Common myeloid progenitor, CD34-positive (primary cell): ENCODE measurements at regions of chr5 and their contacts with region 1.

Region 1: DNA sequence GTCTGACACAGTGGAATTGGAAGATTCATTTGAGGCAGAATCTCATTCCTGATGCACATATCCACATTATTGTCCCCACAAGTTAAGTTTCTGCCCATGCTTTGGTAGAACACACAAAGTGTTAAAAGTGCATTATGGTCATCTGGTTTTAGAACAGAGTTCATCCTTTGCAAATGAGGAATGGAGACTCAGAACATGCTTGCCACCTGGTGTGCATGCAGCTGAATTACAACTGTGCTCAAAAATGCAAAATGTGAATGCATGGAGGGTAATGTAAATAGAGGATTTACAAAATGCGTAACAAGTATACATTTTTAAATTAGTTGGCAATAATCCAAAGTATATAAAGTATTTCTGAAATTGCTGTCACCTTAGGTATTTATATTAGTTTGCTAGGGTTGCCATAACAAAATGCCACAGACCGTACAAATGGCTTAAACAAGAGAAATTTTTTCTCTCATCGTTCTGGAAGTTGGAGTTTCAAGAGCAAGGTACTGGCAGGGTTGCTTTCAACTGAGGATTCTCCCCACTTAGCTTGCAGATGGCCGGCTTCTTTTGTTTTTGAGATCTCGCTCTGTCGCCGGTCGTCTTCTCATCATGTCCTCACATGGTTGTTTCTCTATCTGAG is 671.2 kb downstream of the TAF11L14 start:
- DNase-seq: peak; percentile 29 to 54 (median 50)
- H3K4me3 ChIP-seq: no peak overlapping the region
- H3K27ac ChIP-seq: no peak overlapping the region
- H3K4me1 ChIP-seq: no peaks in the 10 kb centered on the region
- H3K27me3 ChIP-seq: no peaks in the 10 kb centered on the region

Region 2: DNA sequence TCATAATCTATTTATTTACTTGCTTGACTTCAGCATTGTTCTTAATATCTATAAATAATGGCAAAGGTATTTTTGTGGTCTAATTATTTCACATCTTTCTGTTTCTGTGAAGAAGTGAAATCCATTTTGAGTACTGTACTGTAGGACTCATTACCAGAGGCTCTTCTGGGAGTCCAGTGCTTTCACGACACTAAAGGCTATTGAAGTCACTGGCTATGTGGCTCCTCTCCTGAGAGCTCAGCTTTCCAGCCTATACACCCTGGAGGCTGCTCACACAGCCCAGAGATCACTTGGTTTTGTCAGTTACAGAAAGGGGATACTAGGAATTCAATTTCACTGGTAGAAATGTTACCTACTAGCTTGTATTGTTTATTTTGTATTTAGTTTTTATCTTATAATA is 123.8 kb before region 1 on chr5:
- CTCF ChIA-PET with region 1: no interaction called
- POLR2A ChIA-PET with region 1: no interaction called
- DNase-seq: no peak
- H3K4me3 ChIP-seq: no peak overlapping the region
- H3K27ac ChIP-seq: no peak overlapping the region
- H3K4me1 ChIP-seq: no peaks in the 10 kb centered on the region
- H3K27me3 ChIP-seq: peaks cover 0 to 2% (median 0%) of the 10 kb centered on the region in 5 experiments

Region 3: DNA sequence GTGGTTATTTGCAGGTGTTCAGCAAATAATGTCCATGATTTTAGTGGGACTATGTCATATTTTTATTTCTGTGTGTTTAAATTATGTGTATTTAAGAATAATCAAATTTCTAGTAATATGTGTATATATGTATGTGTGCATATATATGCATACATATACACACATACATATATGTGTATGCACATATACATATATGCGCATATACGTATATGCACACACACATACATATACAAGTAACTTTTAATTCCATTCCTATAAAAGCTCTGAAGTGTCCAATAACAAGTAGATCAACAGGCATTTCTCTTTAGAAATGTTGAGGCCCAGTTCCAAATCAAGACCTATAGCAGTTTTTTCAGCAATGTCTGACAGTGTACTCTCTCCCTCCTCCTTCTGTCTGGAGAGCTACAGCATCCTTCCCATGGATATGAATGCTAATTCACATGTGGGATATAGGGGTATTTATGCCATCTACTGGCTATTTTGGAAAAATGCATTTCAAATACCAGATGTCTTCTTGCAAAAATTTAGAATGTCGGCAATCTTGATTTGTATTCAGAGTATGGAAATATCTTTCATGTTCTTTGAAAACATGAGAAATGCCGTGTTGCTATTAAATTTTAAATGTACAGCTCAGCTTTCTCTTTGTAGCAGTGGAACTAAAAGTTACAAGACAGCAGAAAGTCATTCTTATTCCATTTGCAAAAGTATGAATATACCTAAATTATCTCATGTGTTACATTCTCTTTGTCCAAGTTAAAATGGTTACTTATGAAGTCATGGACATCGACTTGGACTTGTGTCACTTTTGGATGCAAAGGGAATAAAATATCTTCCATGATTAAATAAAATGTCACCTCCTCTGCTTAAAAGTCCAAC is 23.5 kb before region 1 on chr5:
- CTCF ChIA-PET with region 1: interaction called, 33 read pairs
- POLR2A ChIA-PET with region 1: no interaction called
- DNase-seq: peak; percentile 25 to 46 (median 41)
- H3K4me3 ChIP-seq: no peak overlapping the region
- H3K27ac ChIP-seq: no peak overlapping the region
- H3K4me1 ChIP-seq: no peaks in the 10 kb centered on the region
- H3K27me3 ChIP-seq: no peaks in the 10 kb centered on the region